A549 (cell line): ENCODE measurements at regions of chr4 and their contacts with region 1.

Region 1: DNA sequence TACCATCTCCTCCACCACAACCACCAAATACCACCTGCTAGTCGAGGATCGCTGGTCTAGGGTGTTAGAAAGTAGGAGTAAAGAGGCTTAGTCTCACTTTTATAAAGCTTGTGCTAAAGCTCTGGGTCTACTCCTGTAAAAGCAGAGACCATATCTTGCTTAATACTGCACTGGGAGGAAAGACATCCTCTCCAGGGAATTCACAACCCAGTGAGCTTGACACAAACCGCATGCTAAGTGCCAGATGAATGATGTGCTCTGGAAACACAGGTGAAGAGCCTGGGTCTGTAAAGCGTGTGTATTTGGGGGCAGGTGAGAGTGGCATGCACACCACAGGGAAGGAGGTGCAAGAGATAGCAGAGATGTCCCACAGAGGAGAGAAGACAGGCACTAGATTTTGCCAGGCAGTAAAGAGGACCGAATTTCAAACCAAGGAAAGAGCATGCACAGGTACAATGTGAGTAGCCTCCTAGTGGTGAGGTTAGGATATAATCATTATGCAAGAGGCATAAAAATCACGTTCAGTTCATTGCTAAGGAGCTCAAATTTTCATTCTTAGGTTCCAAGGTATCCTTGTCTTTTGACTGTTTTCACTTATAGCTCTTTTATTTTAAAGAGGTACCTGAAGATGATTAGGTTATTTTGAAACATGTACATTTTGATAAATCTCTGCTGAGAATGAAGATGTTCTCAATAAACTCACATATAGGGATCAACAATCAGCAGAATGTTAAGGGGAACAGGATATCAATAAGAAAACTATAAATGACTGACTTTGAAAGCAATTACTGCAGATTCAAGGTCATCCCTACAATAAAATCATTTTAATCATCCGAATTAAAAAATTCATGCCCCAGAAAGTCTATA is 20.7 kb downstream of the TAPT1 start:
- DNase-seq: peak; percentile 6 to 14
- ATAC-seq: peak; percentile 77 to 82; a peak in 5 of 6 replicates
- H3K4me3 ChIP-seq: no peak overlapping the region
- H3K27ac ChIP-seq: no peak overlapping the region
- H3K4me1 ChIP-seq: no peaks in the 10 kb centered on the region
- CTCF ChIP-seq: peak; percentile 48
- EP300 ChIP-seq: no peak
- POLR2A ChIP-seq: no peak
- RAD21 ChIP-seq: 0 out of 5 replicates have a peak, but pooled peaks of 1 of the 2 experiments have one; percentile 11

Region 2: DNA sequence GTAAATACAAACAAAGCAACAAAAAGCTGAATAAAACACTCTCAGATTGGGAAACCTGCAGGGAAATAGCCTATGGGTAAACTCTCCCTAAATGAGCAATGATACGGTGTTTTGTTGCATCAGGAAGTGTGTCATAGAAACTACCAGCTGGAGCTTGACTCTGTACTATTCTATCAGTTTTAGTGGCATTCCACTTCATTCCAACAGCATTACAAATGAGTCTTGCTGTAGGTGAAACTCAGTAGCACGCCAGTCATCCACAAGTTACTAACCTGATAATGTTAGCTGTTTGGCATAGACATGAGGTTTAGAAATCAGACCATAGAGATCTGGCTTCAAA is 291.9 kb before region 1 on chr4:
- CTCF ChIA-PET with region 1: no interaction called
- POLR2A ChIA-PET with region 1: no interaction called
- DNase-seq: peak; percentile 31 to 72
- ATAC-seq: peak; percentile 89 to 92
- H3K4me3 ChIP-seq: no peak overlapping the region
- H3K27ac ChIP-seq: peak overlapping the region in 1 of 2 experiments; percentile 76; a peak in 5 of 6 replicates
- H3K4me1 ChIP-seq: peaks cover 20% of the 10 kb centered on the region
- CTCF ChIP-seq: no peak
- EP300 ChIP-seq: no peak
- POLR2A ChIP-seq: no peak
- RAD21 ChIP-seq: no peak

Region 3: DNA sequence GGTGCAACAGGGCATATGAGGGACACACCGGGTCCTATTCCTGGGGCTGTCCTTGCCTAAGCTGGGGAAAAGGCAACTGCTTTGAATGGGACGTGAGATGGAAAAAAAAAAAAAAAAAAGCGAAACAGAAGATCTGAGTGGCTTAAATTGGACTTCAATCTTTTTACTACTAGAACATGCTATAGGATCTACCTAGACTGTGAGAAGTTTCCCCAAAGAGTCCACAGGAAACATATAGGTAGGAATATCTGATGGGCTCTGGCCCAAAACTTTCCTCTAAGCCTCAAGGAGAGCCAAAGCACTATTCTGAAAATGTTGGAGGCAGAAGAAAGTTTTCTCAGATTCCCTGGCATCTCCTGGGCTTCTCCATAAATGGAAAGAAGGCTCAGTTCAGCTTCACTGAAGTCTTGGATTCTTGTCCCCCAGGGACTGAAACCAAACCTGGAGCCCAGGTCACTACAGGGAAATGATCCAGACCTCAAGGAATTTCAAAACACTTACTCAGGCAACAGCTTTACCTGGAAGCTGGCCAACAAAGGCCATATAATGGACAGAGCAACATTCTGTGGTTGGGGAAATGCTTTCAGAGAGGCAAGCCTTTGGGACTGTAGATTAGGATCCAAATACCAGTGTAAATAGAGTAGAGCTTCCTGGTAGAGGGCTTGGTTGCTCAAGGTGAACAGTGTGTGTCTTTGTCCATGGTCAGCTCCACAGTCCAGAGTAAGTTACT is 64.8 kb before region 1 on chr4:
- CTCF ChIA-PET with region 1: no interaction called
- POLR2A ChIA-PET with region 1: no interaction called
- DNase-seq: peak in 1 of 2 experiments; percentile 32
- ATAC-seq: peak in 1 of 2 experiments; percentile 68; a peak in 3 of 6 replicates
- H3K4me3 ChIP-seq: no peak overlapping the region
- H3K27ac ChIP-seq: no peak overlapping the region
- H3K4me1 ChIP-seq: 0 out of 3 replicates have a peak, but pooled peaks cover 6% of the 10 kb centered on the region
- CTCF ChIP-seq: no peak
- EP300 ChIP-seq: no peak
- POLR2A ChIP-seq: no peak
- RAD21 ChIP-seq: no peak

Region 4: DNA sequence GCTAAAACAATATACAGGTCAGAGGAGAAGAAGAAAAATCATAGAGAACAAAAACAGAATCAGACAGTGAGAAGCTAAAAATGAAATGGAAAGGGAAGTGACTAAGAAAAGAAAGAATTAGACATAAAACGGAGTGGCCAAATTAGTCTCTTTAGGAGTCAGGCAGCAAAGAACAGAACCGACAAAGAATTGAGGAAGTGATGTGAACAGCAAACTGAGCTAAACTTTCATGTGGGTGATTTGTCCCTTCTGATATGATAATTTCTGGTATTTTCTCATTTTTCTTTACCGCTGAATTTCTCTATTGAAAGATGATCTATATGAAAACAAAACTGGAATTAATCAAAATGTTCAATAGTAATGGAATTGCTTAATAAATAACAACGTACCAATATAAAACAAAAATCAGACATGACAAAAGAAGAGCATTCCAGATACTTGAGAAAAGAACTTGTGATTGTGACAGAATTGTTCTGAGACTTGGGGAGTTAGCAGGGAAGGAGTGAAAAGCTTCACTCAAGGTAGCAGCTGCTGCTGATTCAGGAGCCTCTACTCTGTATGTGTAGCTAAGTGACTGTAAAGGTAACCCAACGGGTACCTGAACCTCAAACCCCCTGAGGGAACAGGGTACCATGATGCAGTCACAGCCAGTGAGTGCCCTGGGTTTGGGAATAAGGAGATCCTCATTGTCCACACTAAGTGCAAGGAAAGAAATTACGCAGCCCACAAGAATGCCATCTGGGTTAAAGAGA is 11.9 kb after region 1 on chr4:
- CTCF ChIA-PET with region 1: interaction called, 10 read pairs
- POLR2A ChIA-PET with region 1: no interaction called
- DNase-seq: no peak
- ATAC-seq: no peak
- H3K4me3 ChIP-seq: no peak overlapping the region
- H3K27ac ChIP-seq: no peak overlapping the region
- H3K4me1 ChIP-seq: no peaks in the 10 kb centered on the region
- CTCF ChIP-seq: no peak
- EP300 ChIP-seq: no peak
- POLR2A ChIP-seq: no peak
- RAD21 ChIP-seq: no peak

Region 5: DNA sequence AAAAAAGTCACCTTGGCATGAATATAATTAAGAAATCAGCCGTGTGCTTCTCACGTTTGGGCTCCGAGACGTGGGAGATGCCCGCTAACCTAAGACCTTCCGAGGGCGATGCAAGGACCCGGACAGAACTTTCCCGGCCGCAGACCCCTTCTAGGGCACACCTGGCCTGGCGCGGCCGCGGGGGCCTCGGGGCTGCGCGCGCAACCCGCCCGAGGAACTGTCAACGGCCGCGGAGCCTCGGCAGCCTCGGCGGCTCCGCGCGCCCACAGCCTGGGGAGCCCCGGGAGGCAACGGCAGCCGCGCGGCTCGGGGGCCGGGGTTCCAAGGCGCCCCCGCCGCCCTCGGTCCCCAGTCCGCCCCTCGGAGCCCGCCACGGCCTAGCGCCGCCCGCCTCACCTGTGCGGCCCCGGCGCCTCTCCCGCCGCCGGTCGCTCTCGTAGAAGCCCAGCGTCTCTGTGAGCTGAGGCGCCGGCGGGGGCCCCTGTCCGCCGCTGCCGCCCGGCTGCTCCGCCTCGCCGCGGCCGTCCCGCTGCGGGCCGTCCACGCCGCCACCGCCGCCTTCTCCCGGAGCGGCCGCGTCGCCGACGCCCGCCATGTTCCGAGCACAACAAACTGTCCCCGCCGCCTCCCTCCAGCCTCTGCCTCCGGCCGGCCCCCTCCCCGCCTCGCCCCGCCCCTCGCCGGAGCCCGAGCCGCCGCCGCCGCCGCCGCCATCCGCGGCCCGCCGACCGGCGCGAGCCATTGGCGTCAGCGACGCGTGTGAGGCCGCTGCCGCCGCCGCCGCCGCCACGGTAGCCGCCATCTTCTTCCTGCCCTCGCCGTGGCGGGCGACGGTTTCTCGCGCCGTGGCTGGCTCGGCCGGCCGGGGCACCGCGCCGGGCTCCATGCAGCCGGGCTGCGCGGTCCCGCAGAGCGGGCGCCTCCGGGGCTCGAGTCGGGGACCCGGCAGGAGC is 20.6 kb after region 1 on chr4 and contains the start of gene TAPT1:
- CTCF ChIA-PET with region 1: interaction called, 10 read pairs
- POLR2A ChIA-PET with region 1: interaction called, 4 read pairs
- DNase-seq: peak; percentile 38 to 48
- ATAC-seq: peak; percentile 62 to 80
- H3K4me3 ChIP-seq: peak within 1 kb of the TSS; percentile 95
- H3K27ac ChIP-seq: peak within 1 kb of the TSS; percentile 100
- H3K4me1 ChIP-seq: peaks cover 25% of the 10 kb centered on the region
- CTCF ChIP-seq: no peak
- EP300 ChIP-seq: no peak
- POLR2A ChIP-seq: peak; percentile 35
- RAD21 ChIP-seq: no peak
- polyA plus RNA-seq, gene TAPT1: 17.1 and 20.2 TPM in 2 replicates